A673 (cell line): ENCODE measurements at regions of chr12 and their contacts with region 1.

Region 1: GRCh38 chr12:122336015-122336946 is 70.0 kb upstream of the VPS33A start:
- DNase-seq: peak; percentile 47
- H3K4me3 ChIP-seq: no peak overlapping the region
- H3K27ac ChIP-seq: no peak overlapping the region
- H3K4me1 ChIP-seq: no peaks in the 10 kb centered on the region
- H3K27me3 ChIP-seq: no peaks in the 10 kb centered on the region
- CTCF ChIP-seq: peak; percentile 78

Region 2: DNA sequence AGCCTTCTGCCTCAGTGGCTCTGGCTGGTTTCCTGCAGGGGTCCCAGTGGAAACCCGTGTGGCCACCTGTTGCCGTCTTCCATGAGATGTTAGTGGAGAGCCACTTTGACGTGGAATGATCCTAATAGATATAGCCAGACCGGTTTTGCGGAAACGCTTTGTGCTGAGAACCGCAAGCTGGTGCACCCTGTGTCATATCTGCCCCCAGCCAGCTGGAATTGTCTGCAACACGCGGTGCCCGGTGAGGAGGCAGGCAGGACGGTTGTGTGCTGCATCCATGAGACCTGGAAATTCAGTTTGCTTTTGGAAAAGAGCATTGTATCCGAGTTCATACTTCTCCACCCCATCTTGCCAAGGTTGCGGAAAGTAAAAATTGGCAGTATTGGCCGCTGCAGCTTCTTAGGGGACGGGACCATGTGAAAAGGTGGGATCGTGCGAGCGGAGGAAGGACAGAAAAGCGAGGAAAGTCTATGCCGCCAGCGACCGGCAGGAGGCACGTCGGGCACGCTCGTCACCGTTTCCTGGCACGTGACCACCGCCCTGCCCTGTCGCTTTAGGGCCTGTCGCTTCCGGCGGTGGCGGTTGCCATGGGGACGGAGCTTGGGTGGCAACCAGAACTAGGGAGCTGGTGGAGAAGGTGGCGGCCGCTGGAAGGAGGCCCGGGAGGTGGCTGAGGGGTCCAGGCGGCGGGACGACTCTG is 418.2 kb before region 1 on chr12 and contains the start of gene CFAP251:
- CTCF ChIA-PET with region 1: no interaction called
- POLR2A ChIA-PET with region 1: no interaction called
- intact Hi-C with region 1: no loop called
- DNase-seq: peak; percentile 98
- H3K4me3 ChIP-seq: peak within 1 kb of the TSS; percentile 56
- H3K27ac ChIP-seq: peak within 1 kb of the TSS; percentile 81
- H3K4me1 ChIP-seq: peaks cover 37% of the 10 kb centered on the region
- H3K27me3 ChIP-seq: no peaks in the 10 kb centered on the region
- CTCF ChIP-seq: peak; percentile 72
- total RNA-seq, gene CFAP251: 5.5 and 7.5 TPM in 2 replicates

Region 3: GRCh38 chr12:122471324-122472226 is 135.3 kb after region 1 on chr12:
- CTCF ChIA-PET with region 1: interaction called, 3 read pairs
- POLR2A ChIA-PET with region 1: no interaction called
- intact Hi-C with region 1: loop called (anchors 5 kb)
- DNase-seq: peak; percentile 83
- H3K4me3 ChIP-seq: no peak overlapping the region
- H3K27ac ChIP-seq: peak overlapping the region; percentile 33
- H3K4me1 ChIP-seq: no peaks in the 10 kb centered on the region
- H3K27me3 ChIP-seq: no peaks in the 10 kb centered on the region
- CTCF ChIP-seq: peak; percentile 85